ENCODE measurements at regions of chr3 and their contacts with region 1.

Region 1: DNA sequence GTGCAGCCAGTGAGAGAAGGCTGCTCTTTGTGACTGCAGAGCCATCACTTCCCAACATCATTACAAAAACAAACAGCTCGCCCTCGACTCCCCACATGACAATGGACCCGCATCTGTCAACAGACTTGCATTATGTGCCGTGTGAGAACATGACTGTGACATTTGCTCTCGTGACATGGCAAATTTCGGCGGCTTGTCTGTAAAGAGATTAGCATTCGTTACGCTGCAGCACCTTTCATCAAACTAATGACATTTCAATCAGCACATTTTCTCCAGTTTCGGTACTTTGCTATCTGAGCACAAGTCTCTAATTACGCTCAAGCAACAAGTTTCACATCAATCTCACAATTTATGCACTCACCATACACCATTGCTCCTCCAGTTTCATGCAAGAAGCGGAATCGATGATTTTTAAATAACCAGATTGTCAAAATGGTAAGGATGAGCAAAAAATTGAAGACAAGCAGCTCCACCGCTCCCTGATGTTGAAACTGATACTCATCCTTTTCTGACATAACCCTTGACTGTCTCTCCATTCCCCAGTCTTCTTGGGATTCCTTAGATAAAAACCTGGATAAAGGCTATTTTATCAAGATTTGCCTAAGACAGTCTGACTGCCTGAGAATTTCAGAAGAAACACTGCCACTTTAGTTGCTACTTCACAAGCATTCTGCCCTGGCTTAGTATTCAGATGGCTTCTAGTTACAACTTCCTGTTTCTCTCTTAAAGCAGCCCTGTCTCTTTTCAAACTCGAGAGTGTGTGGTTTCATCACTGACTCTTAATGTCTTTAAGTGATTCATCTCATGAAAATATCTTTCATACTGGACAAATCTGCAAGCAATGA is at the start of gene SLC9A9:
- DNase-seq: peak; percentile 52
- ATAC-seq: peak; percentile 95
- H3K4me3 Mint-ChIP-seq: peak within 1 kb of the TSS; percentile 84
- H3K27ac Mint-ChIP-seq: peak within 1 kb of the TSS; percentile 84
- H3K4me1 Mint-ChIP-seq: peaks cover 44% of the 10 kb centered on the region
- H3K27me3 Mint-ChIP-seq: peaks cover 2% of the 10 kb centered on the region
- CTCF ChIP-seq: no peak
- total RNA-seq, gene SLC9A9: 1.9 to 2.2 TPM

Region 2: DNA sequence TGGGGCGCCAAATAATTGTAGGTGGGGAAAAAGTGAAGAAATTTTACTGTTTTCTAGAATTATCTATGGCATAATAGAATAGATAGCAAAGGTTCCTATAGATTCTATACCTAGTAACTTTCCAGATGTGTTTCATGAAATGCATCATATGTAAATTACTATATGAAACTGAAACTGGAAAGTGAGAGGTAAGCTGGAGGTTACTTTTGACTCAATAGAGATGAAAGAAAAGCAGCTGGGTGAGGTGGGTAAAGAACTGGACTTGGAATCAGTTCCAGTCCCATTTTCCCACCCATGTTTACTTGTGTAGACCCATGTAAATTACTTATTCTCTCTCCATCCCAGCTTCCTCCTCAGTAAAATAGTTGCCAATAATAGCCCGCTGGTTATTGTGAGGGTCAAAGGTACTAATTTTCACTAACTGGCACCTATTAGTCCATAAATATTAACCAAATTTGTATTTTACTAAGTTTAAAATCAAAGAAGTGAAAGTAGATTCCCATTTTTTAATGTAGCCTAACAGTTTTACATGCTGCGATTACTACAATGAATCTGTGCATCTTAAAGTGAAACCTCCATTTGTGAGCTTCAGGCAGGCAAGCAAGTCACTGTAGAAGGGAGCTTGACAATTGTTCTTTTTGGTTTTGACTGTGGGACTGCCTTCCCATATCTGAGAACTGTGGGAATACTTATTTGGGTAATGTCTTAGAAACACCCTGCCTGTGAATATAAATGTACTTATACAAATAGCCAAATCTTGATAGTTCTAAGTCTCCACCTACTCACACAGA is 311.8 kb before region 1 on chr3:
- CTCF ChIA-PET with region 1: no interaction called
- POLR2A ChIA-PET with region 1: no interaction called
- intact Hi-C with region 1: loop called (anchors 5 kb)
- DNase-seq: no peak
- ATAC-seq: peak; percentile 88
- H3K4me3 Mint-ChIP-seq: no peak overlapping the region
- H3K27ac Mint-ChIP-seq: no peak overlapping the region
- H3K4me1 Mint-ChIP-seq: peaks cover 19% of the 10 kb centered on the region
- H3K27me3 Mint-ChIP-seq: no peaks in the 10 kb centered on the region
- CTCF ChIP-seq: no peak

Region 3: GRCh38 chr3:143775459-143775858 is 72.5 kb before region 1 on chr3:
- CTCF ChIA-PET with region 1: interaction called, 3 read pairs
- POLR2A ChIA-PET with region 1: interaction called, 3 read pairs
- intact Hi-C with region 1: loop called (anchors 5 kb)
- DNase-seq: peak; percentile 30
- ATAC-seq: peak; percentile 88
- H3K4me3 Mint-ChIP-seq: no peak overlapping the region
- H3K27ac Mint-ChIP-seq: no peak overlapping the region
- H3K4me1 Mint-ChIP-seq: no peaks in the 10 kb centered on the region
- H3K27me3 Mint-ChIP-seq: no peaks in the 10 kb centered on the region
- CTCF ChIP-seq: peak; percentile 74

Region 4: DNA sequence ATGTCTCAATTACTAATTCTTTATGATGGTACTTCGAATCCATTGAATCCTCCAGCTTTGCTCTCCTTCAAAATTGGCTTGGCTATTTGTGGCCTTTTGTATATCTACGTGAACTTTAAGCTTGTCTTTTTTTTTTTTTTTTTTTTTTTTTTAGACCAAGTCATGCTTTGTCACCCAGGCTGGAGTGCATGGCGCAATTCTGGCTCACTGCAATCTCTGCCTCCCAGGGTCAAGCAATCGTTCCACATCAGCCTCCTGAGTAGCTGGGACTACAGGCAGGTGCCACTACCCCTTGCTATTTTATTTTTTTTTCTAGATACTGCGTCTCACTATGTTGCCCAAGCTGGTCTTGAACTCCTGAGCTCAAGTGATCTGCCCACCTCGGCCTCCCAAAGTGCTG is 115.9 kb after region 1 on chr3:
- CTCF ChIA-PET with region 1: no interaction called
- POLR2A ChIA-PET with region 1: no interaction called
- intact Hi-C with region 1: no loop called
- DNase-seq: no peak
- ATAC-seq: no peak
- H3K4me3 Mint-ChIP-seq: no peak overlapping the region
- H3K27ac Mint-ChIP-seq: no peak overlapping the region
- H3K4me1 Mint-ChIP-seq: no peaks in the 10 kb centered on the region
- H3K27me3 Mint-ChIP-seq: peaks cover 22% of the 10 kb centered on the region
- CTCF ChIP-seq: no peak